Calu3 (cell line): ENCODE measurements at regions of chr17 and their contacts with region 1.

Region 1: DNA sequence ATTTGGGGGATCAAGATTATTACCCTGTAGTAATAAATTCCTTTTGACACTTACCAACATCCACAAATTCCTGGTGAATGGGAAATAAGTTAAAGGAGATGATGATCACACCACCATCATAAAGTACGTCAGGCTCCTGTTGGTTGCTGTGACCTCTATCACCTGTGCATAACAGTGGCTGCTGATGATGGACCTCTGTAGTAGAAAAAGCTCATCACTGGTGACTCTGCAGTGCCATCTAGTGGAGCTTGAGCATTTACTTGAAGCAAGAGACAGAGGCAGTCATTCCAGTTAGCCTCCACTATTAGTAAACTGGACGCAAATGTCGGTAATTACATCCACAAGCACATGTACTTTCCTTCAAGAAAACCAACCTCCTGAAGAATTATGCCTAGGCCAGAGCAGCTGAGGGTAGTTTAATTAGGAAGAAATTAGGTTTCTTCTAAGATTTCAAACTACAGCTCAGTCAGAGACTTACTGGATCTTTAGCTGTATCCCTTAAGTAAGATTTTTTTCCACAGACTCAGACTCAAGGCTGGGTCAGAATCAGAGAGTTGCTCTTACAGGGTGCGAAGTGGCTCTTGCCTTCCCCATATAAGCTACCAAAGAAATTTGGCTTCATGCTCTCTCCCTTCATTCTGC is 39.3 kb downstream of the CYB561 start:
- DNase-seq: peak; percentile 67
- H3K4me3 Mint-ChIP-seq: no peak overlapping the region
- H3K27ac Mint-ChIP-seq: no peak overlapping the region
- H3K4me1 Mint-ChIP-seq: no peaks in the 10 kb centered on the region
- H3K27me3 Mint-ChIP-seq: no peaks in the 10 kb centered on the region
- CTCF ChIP-seq: peak; percentile 62

Region 2: GRCh38 chr17:62671583-62672312 is 735.1 kb before region 1 on chr17:
- CTCF ChIA-PET with region 1: interaction called, 12 read pairs
- intact Hi-C with region 1: loop called (anchors 1 kb)
- DNase-seq: peak; percentile 58
- H3K4me3 Mint-ChIP-seq: peak overlapping the region; percentile 16
- H3K27ac Mint-ChIP-seq: no peak overlapping the region
- H3K4me1 Mint-ChIP-seq: peaks cover 17% of the 10 kb centered on the region
- H3K27me3 Mint-ChIP-seq: no peaks in the 10 kb centered on the region
- CTCF ChIP-seq: no peak

Region 3: DNA sequence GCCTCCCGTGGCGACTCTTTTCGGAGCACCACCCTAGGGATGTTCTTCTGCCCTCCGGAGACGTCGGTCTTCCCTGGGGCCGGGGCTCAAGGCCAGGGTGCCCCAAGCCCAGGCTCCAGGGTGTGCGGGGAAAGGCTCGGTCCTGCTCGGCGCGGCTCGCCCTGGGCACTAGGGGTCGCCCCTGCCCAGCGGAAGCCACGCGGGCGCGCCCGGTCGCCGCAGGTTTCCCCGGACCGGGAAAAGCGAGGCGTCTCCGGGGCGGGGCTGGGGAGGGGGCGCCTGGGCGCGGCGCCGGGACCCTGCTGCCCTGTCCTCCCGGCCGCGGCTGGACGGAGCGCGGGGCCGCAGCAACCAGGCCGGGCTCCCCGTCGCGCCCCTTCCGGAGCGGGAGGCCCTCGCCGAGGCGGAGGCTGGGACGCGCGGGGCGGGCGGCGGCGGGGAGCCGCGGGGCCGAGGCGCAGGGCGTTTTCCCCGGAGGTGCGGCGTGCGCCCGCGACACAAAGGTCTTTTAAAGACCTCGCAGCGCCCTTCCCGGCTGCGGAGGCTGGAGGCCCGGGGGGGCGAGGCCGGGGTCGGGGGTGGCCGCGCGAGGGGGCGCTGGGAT is 702.9 kb before region 1 on chr17:
- CTCF ChIA-PET with region 1: no interaction called
- intact Hi-C with region 1: loop called (anchors 2 kb)
- DNase-seq: peak; percentile 82
- H3K4me3 Mint-ChIP-seq: peak overlapping the region; percentile 62
- H3K27ac Mint-ChIP-seq: no peak overlapping the region
- H3K4me1 Mint-ChIP-seq: peaks cover 15% of the 10 kb centered on the region
- H3K27me3 Mint-ChIP-seq: no peaks in the 10 kb centered on the region
- CTCF ChIP-seq: peak; percentile 76

Region 4: DNA sequence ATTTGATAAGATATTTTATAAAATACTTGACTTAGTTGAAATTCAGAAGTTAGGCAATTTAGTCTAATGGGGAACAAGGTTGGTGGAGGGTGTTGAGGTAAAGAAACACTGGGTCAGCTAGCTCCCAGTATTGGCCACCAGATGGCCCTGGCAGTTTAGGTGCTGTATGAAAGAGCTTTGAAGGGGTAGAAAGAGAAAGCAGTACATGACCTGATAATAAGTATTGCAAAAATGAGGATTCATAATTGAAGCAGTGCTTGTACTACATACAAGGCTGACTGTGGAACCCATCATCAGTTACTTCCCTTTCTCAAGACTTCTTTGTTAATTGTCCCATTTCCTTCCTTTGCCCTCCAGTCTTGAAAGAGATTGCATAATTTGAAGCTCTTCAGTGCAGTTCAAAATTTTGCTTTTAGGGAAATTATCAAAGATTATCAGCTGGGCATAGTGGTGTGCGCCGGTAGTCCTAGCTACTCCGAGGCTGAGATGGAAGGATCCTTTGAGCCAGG is 411.4 kb before region 1 on chr17:
- CTCF ChIA-PET with region 1: interaction called, 20 read pairs
- intact Hi-C with region 1: loop called (anchors 2 kb)
- DNase-seq: peak; percentile 21
- H3K4me3 Mint-ChIP-seq: no peak overlapping the region
- H3K27ac Mint-ChIP-seq: no peak overlapping the region
- H3K4me1 Mint-ChIP-seq: no peaks in the 10 kb centered on the region
- H3K27me3 Mint-ChIP-seq: no peaks in the 10 kb centered on the region
- CTCF ChIP-seq: peak; percentile 19

Region 5: DNA sequence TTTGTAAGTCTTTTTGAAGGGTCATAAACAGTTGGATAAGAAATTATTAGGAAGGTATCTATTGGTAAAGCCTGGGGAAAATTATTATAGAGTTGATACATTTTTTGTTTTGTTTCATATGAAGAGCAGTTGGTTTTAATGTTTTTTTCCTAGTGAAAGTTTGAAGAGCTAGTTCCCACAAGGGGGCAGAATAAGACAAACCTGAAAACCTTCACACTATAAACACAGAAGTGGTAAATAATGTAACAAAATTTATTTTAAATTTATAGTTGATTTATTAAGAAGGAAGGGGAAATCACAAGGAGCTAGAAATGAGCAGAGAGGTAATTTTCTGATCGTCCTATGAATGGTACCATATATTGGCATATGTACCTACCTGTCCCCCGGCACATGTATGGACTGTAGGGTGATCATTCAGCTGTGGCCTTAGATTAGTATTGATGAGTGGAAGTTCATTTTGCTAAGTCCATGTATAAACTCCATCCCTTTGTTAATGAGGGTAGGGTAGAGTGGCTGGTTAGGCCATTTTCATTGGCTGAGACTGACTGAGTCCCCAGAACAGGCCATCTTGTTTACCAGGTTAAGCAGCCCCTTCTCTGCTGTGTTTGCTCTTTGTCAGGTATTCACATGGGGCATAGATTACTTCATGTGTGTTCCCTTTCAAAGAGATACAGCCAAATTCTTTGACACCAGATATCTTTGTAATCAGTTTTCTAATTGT is 324.4 kb before region 1 on chr17:
- CTCF ChIA-PET with region 1: interaction called, 30 read pairs
- intact Hi-C with region 1: loop called (anchors 1 kb)
- DNase-seq: no peak
- H3K4me3 Mint-ChIP-seq: no peak overlapping the region
- H3K27ac Mint-ChIP-seq: no peak overlapping the region
- H3K4me1 Mint-ChIP-seq: peaks cover 9% of the 10 kb centered on the region
- H3K27me3 Mint-ChIP-seq: no peaks in the 10 kb centered on the region
- CTCF ChIP-seq: peak; percentile 14

Region 6: DNA sequence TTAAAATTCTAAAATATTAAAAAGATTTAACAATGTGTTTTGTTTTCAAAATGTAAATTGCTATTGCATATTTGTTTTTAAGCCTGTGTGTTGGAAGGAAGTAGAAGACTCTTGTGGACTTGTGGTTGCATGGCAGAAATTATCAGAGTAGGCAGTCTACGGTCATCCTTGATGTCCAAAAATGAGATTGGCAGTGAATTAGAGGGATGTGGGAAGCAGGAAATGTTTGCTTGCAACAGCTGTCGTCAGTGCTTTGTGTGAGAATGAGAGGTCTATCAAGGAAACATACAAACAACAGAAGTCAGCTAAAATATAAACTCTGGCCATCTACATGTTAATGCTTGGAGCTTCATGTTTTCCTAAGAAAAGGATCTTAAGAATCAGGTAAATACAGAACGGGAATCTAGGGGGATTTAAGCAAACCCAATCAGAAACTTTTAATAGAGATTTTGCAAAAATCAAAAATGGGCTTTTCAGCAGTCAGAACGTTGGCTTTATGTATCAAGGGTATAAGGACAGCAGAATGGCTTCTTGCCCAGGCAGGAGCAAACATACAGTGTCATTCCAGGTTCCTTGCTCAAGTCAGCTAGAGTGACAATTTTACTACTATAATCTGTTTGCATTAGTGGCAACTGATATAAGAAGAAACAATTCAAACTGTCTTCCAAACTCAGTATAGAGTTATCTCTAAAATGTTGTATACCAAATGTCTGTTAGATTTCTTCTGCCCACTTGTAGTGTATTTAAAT is 157.4 kb before region 1 on chr17:
- CTCF ChIA-PET with region 1: no interaction called
- intact Hi-C with region 1: no loop called
- DNase-seq: no peak
- H3K4me3 Mint-ChIP-seq: no peak overlapping the region
- H3K27ac Mint-ChIP-seq: no peak overlapping the region
- H3K4me1 Mint-ChIP-seq: no peaks in the 10 kb centered on the region
- H3K27me3 Mint-ChIP-seq: no peaks in the 10 kb centered on the region
- CTCF ChIP-seq: no peak